ENCODE measurements at regions of chr5 and their contacts with region 1.

Region 1: DNA sequence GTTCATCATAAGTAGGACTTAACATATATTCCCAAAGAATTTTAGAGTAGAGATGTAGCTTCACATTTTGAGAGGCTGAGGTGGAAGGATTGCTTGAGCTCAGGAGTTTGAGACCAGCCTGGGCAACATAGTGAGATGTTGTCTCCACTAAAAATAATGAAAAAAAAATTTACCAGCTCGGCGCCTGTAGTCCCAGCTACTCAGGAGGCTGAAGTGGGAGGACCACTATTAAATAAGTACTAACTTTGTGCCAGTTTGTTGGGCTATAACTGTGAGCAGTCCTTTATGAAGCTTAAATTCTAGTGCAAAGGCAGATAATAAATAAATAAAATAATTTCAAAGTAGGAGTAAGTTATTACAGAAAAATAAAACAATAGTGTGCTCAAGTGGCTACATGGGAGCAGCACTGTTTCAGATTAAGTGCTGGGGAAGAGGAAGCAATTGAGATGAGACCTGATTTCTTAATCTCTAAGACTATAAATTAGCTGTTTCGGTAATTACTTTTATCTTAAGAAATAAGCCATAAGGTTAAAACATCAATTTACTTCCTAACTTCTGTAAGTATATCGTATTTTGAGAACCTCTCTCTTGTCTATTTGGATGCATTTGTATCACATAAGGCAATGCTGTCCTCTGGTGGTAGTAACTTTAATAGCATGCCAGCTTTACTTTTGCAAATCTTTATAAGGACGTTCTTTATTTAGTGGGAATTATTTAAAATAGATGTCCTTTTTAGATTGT is 98.9 kb downstream of the CSNK1G3 start:
- DNase-seq: peak in 1 of 2 donors; percentile 29
- ATAC-seq: peak in 5 of 8 donors; percentile 49 to 69 (median 61)
- H3K4me3 ChIP-seq: no peak overlapping the region
- H3K27ac ChIP-seq: peak overlapping the region in 1 of 10 donors; percentile 24
- H3K4me1 ChIP-seq: peaks cover 0 to 18% (median 0%) of the 10 kb centered on the region in 9 donors
- H3K27me3 ChIP-seq: no peaks in the 10 kb centered on the region
- CTCF ChIP-seq: peak; percentile 89 to 99 (median 94)

Region 2: DNA sequence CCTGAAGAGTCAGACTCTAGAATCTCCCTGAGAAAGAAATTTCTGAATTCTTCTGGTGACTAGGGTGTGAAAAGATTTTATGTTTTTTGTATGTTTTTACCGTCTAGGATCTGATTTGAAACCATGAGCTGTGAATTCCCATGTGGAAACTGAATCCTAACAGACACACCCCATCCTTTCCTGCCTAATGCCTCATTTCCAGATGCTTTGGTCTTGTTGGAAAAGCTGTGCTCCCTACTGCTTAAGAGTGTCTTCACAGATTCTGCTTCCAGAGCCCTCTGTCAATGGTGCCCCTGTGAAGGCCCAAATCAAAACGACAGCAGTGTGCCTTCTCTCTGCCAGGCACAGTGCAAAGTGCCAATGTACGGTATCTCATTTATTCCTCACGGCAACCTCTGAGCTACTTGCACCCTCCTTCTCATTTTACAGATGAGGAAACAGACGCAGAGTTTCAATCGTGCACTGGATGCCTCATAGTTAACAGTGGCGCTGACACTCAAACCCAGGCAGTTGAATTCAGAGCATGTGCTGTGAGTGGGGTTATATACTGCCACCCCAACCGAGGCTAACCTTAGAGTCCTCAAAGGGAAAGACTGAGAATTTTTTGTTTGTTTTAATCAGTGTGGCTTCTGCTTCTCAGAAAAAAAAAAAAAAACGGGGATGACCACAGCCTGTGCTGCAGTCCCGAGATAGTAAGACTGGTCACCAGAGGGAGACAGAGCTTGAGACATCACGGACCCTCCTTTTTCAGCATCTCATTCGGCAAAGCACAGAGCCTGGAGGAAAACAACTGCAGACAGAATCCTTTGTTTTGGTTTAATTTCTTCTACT is 1110.4 kb before region 1 on chr5:
- intact Hi-C with region 1: loop called in 1 of 10 experiments (anchors 10 kb)
- DNase-seq: peak in 1 of 2 donors; percentile 40
- ATAC-seq: peak; percentile 30 to 86 (median 76)
- H3K4me3 ChIP-seq: peak overlapping the region in 1 of 10 donors; percentile 5
- H3K27ac ChIP-seq: peak overlapping the region in 6 of 10 donors; percentile 4 to 54 (median 34)
- H3K4me1 ChIP-seq: peaks cover 0 to 18% (median 0%) of the 10 kb centered on the region in 9 donors
- H3K27me3 ChIP-seq: no peaks in the 10 kb centered on the region
- CTCF ChIP-seq: peak; percentile 16 to 63 (median 49)

Region 3: GRCh38 chr5:122653087-122653959 is 957.5 kb before region 1 on chr5:
- intact Hi-C with region 1: no loop called
- DNase-seq: no peak
- ATAC-seq: no peak
- H3K4me3 ChIP-seq: no peak overlapping the region
- H3K27ac ChIP-seq: no peak overlapping the region
- H3K4me1 ChIP-seq: no peaks in the 10 kb centered on the region
- H3K27me3 ChIP-seq: peaks cover 0 to 3% (median 0%) of the 10 kb centered on the region in 7 donors
- CTCF ChIP-seq: no peak

Region 4: GRCh38 chr5:124669956-124670721 is 1059.3 kb after region 1 on chr5:
- intact Hi-C with region 1: no loop called
- DNase-seq: no peak
- ATAC-seq: peak in 5 of 8 donors; percentile 21 to 59 (median 39)
- H3K4me3 ChIP-seq: no peak overlapping the region
- H3K27ac ChIP-seq: peak overlapping the region in 1 of 10 donors; percentile 1
- H3K4me1 ChIP-seq: peaks cover 0 to 74% (median 46%) of the 10 kb centered on the region in 9 donors
- H3K27me3 ChIP-seq: no peaks in the 10 kb centered on the region
- CTCF ChIP-seq: no peak

Measured in heart right ventricle (tissue), 16 donors.